Heart left ventricle (tissue), 16 donors: ENCODE measurements at regions of chr7 and their contacts with region 1.

Region 1: GRCh38 chr7:138400400-138400886 is 59.6 kb upstream of the TRIM24 start:
- DNase-seq: no peak
- ATAC-seq: no peak
- H3K4me3 ChIP-seq: no peak overlapping the region
- H3K27ac ChIP-seq: no peak overlapping the region
- H3K4me1 ChIP-seq: no peaks in the 10 kb centered on the region
- H3K27me3 ChIP-seq: no peaks in the 10 kb centered on the region
- CTCF ChIP-seq: no peak
- POLR2A ChIP-seq: no peak

Region 2: GRCh38 chr7:138338361-138338760 is 62.1 kb before region 1 on chr7:
- intact Hi-C with region 1: loop called in 1 of 10 experiments (anchors 10 kb)
- DNase-seq: peak; percentile 74 to 84 (median 77)
- ATAC-seq: peak; percentile 82 to 94 (median 89)
- H3K4me3 ChIP-seq: no peak overlapping the region
- H3K27ac ChIP-seq: peak overlapping the region in 9 of 12 donors; percentile 20 to 72 (median 54)
- H3K4me1 ChIP-seq: peaks cover 0 to 15% (median 3%) of the 10 kb centered on the region in 12 donors
- H3K27me3 ChIP-seq: no peaks in the 10 kb centered on the region
- CTCF ChIP-seq: no peak
- POLR2A ChIP-seq: no peak

Region 3: DNA sequence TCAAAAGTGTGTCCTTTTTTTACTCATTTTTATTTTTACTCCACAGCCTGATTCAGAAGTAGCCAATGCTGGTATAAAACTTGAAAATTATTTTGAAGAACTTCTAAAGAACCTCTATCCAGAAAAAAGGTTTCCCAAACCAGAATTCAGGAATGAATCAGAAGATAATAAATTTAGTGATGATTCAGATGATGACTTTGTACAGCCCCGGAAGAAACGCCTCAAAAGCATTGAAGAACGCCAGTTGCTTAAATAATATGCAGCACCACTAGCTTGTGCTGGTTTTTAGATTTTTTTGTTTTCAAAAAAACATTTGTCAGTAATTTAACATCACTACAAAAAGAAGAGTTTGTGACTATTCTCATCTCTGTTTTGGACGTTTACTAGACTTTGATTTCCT is 184.3 kb after region 1 on chr7:
- intact Hi-C with region 1: no loop called
- DNase-seq: no peak
- ATAC-seq: no peak
- H3K4me3 ChIP-seq: no peak overlapping the region
- H3K27ac ChIP-seq: no peak overlapping the region
- H3K4me1 ChIP-seq: peaks cover 0 to 11% (median 0%) of the 10 kb centered on the region in 12 donors
- H3K27me3 ChIP-seq: no peaks in the 10 kb centered on the region
- CTCF ChIP-seq: no peak
- POLR2A ChIP-seq: no peak